ENCODE measurements at regions of chr20 and their contacts with region 1.

Region 1: GRCh38 chr20:48051794-48052474 is 266.7 kb upstream of the SULF2 start:
- DNase-seq: peak; percentile 96
- H3K4me3 Mint-ChIP-seq: no peak overlapping the region
- H3K27ac Mint-ChIP-seq: peak overlapping the region; percentile 94
- H3K4me1 Mint-ChIP-seq: peaks cover 20% of the 10 kb centered on the region
- H3K27me3 Mint-ChIP-seq: no peaks in the 10 kb centered on the region
- CTCF ChIP-seq: no peak

Region 2: DNA sequence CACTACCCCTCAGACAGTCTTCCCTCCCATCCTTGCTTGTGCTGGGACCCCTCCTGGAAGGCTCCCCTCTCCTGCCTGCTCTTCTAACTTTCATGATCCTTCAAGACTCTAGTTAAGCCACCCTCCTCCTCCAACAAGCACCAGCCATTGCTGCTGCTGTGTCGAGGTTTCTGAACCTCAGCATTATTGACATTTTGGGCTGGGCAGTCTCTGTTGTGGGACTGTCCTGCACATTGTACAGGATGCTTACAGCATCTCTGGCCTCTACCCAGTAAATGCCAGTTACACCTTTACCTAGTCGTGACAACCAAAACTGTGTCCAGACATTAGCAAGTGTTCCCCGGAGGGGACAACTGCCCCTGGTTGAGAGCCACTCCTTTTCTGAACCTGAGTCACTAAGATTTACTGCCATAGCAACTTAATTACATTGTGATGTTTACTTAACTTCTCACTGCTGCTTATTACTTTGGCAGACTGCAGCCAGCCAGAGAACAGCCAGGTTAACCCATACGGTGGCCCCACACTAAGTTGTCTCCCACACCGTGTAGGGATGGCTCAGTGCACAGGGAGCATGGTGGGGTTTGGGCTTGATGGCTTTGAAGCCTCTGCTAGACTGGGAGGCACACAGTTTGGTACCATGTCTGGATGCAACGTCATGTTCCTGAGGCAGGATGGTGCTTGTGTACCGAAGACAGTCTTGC is 62.1 kb before region 1 on chr20:
- CTCF ChIA-PET with region 1: no interaction called
- POLR2A ChIA-PET with region 1: no interaction called
- intact Hi-C with region 1: no loop called
- DNase-seq: no peak
- H3K4me3 Mint-ChIP-seq: no peak overlapping the region
- H3K27ac Mint-ChIP-seq: peak overlapping the region; percentile 69
- H3K4me1 Mint-ChIP-seq: no peaks in the 10 kb centered on the region
- H3K27me3 Mint-ChIP-seq: no peaks in the 10 kb centered on the region
- CTCF ChIP-seq: no peak

Region 3: DNA sequence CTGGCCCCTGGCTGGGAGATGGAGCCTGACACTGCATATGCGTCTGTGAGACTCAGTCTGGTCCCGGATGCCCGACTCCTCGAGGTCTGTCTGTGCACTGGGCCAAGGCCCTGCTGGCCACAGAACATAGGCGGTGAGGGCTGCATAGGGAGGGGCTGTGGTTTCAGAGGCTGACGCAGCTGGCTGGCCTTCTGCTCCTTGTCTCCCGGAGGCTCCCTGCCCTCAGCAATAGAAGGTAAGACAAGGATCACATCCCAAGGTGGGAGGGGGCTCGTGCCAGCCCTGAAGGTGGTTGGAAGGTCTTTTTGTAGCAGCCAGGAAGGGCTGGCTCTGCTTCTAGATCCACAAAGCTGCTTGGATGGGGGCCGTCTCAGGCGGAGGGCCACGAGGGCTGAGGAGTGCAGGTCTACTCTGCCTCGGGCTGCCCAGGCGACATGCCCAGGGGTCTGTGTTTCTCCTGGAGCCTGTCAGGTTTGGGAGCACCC is 26.9 kb before region 1 on chr20:
- CTCF ChIA-PET with region 1: interaction called, 4 read pairs
- POLR2A ChIA-PET with region 1: interaction called, 23 read pairs
- intact Hi-C with region 1: no loop called
- DNase-seq: peak; percentile 84
- H3K4me3 Mint-ChIP-seq: peak overlapping the region; percentile 78
- H3K27ac Mint-ChIP-seq: peak overlapping the region; percentile 96
- H3K4me1 Mint-ChIP-seq: peaks cover 29% of the 10 kb centered on the region
- H3K27me3 Mint-ChIP-seq: no peaks in the 10 kb centered on the region
- CTCF ChIP-seq: no peak

Region 4: DNA sequence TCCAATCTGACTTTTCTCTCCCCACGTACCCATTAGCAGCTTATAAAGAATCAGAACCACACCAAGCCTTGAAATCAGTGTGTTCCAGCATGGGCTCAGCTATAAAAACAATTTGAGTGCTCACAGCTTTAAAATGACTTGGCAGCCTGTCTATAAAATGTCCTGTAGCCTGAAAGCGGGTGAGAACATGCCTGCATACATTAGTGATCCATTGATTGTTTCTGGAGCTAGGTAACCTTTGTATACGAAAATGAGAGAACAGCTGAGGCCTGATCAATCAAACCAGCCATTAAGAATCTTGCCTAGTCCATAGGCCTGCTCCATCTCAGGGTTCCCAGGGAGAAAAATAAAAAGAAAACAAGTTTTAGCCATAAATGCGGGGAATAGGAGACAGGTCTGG is 20.8 kb before region 1 on chr20:
- CTCF ChIA-PET with region 1: interaction called, 4 read pairs
- POLR2A ChIA-PET with region 1: interaction called, 23 read pairs
- intact Hi-C with region 1: no loop called
- DNase-seq: no peak
- H3K4me3 Mint-ChIP-seq: no peak overlapping the region
- H3K27ac Mint-ChIP-seq: no peak overlapping the region
- H3K4me1 Mint-ChIP-seq: peaks cover 27% of the 10 kb centered on the region
- H3K27me3 Mint-ChIP-seq: no peaks in the 10 kb centered on the region
- CTCF ChIP-seq: no peak

Region 5: DNA sequence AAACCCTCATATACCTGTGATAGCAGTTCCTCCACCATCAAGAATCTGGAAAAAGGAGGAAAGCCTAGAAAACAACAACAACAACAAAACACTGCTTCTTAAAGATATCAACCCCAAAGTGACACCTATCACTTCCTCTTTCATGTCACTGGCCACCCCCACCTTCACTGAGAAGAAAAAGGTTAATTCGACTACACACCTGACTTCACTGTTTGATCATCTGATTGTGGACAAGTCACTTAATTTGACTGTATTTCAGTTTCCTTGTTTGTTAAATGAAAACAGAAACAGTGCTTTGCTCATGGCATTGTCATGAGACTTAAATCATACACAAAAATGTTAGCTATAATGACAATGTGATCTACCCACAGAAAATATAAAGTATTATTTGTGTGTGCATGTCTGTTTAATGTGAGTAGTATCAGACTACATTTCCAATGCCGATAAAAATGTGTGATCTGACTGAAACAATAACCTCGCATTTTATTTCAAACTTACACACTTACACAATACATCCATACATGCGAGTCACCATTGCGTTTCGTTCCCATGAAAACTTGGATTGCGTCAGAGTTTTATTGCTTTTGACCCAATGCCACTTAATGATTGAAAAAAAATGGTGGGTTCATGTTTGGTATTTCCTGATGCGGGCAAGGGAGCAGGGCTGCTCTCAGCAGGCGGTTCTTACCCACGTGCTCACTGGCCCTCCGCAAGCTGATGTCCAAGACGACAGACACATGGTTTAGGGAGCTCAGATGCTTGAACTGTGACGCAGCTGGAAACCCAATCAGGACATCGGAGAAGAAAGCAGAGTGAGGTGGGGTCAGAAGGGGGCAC is 14.1 kb after region 1 on chr20:
- CTCF ChIA-PET with region 1: interaction called, 3 read pairs
- POLR2A ChIA-PET with region 1: interaction called, 13 read pairs
- intact Hi-C with region 1: no loop called
- DNase-seq: peak; percentile 89
- H3K4me3 Mint-ChIP-seq: no peak overlapping the region
- H3K27ac Mint-ChIP-seq: peak overlapping the region; percentile 66
- H3K4me1 Mint-ChIP-seq: peaks cover 21% of the 10 kb centered on the region
- H3K27me3 Mint-ChIP-seq: no peaks in the 10 kb centered on the region
- CTCF ChIP-seq: no peak

Measured in MCF 10A (cell line).